ENCODE measurements at regions of chr9 and their contacts with region 1.

Region 1: DNA sequence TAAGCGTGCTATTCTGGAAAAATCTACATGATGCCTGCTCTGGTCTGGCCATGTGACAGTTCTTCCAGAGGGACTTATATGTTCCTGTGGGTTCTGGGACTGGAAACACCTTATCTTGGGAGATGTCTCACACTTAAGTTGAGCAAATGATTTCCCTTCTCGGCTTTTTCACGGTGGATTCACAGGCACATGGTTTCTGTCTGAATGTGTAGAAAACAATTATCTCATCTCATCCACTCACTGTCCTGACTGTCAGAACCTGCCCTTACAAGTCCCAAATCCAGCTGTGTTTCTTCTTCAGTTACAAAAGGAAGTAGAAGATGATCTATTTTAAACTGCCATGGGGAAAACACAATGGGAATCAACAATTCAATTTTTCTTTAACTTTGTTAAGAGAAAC is 184.0 kb downstream of the SYK start:
- DNase-seq: no peak
- ATAC-seq: no peak
- H3K4me3 ChIP-seq: no peak overlapping the region
- H3K27ac ChIP-seq: no peak overlapping the region
- H3K4me1 ChIP-seq: no peaks in the 10 kb centered on the region
- H3K27me3 ChIP-seq: no peaks in the 10 kb centered on the region
- CTCF ChIP-seq: no peak
- EP300 ChIP-seq: no peak
- POLR2A ChIP-seq: no peak
- RAD21 ChIP-seq: no peak

Region 2: DNA sequence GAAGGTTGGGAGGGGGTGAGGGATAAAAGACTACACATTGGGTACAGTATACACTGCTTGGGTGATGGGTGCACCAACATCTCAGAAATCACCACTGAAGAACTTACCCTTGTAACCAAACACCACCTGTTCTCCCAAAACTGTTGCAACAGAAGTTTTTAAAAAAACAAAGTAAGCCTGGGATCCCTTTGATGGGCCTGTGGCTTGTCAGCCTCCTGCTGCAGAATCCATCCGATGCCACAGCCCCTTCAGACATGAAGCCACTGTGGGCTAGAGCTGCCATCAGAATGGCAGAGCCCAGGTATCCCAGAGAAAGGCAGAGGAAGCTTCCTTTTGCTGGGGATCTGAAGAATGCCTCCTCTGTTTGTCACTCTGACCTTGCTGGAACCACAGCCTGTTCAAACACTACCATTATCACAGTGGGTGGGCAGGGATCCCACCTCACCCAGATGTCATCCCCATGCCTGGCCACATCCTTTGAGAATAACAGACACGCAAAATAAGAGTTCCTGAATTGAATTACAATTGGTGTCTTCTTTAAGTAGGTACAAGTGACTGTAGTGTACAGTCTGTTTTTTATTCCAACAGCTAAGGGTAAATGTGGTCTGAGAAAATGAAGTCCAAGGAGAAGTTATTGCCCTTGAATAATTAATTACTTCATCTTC is 264.9 kb before region 1 on chr9:
- CTCF ChIA-PET with region 1: no interaction called
- POLR2A ChIA-PET with region 1: no interaction called
- RAD21 ChIA-PET with region 1: no interaction called
- SMC1A ChIA-PET with region 1: no interaction called
- in situ Hi-C with region 1: no loop called
- intact Hi-C with region 1: no loop called
- DNase-seq: no peak
- ATAC-seq: no peak
- H3K4me3 ChIP-seq: no peak overlapping the region
- H3K27ac ChIP-seq: no peak overlapping the region
- H3K4me1 ChIP-seq: no peaks in the 10 kb centered on the region
- H3K27me3 ChIP-seq: no peaks in the 10 kb centered on the region; a peak in 2 of 4 replicates
- CTCF ChIP-seq: no peak
- EP300 ChIP-seq: no peak
- POLR2A ChIP-seq: no peak
- RAD21 ChIP-seq: no peak

Region 3: GRCh38 chr9:91033797-91034196 is 48.2 kb after region 1 on chr9:
- CTCF ChIA-PET with region 1: no interaction called
- POLR2A ChIA-PET with region 1: no interaction called
- RAD21 ChIA-PET with region 1: no interaction called
- SMC1A ChIA-PET with region 1: no interaction called
- in situ Hi-C with region 1: no loop called
- intact Hi-C with region 1: no loop called
- DNase-seq: no peak
- ATAC-seq: peak; percentile 71
- H3K4me3 ChIP-seq: no peak overlapping the region
- H3K27ac ChIP-seq: no peak overlapping the region
- H3K4me1 ChIP-seq: peaks cover 30% of the 10 kb centered on the region
- H3K27me3 ChIP-seq: peaks cover 0 to 5% of the 10 kb centered on the region in 2 experiments; a peak in 3 of 4 replicates
- CTCF ChIP-seq: peak; percentile 50 to 74 (median 63)
- EP300 ChIP-seq: no peak
- POLR2A ChIP-seq: no peak
- RAD21 ChIP-seq: peak; percentile 88

Region 4: GRCh38 chr9:91047993-91048607 is 62.5 kb after region 1 on chr9:
- CTCF ChIA-PET with region 1: no interaction called
- POLR2A ChIA-PET with region 1: no interaction called
- RAD21 ChIA-PET with region 1: no interaction called
- SMC1A ChIA-PET with region 1: no interaction called
- in situ Hi-C with region 1: no loop called
- intact Hi-C with region 1: loop called (anchors 10 kb)
- DNase-seq: no peak
- ATAC-seq: no peak
- H3K4me3 ChIP-seq: no peak overlapping the region
- H3K27ac ChIP-seq: no peak overlapping the region
- H3K4me1 ChIP-seq: no peaks in the 10 kb centered on the region
- H3K27me3 ChIP-seq: no peaks in the 10 kb centered on the region; a peak in 1 of 4 replicates
- CTCF ChIP-seq: no peak
- EP300 ChIP-seq: no peak
- POLR2A ChIP-seq: no peak
- RAD21 ChIP-seq: no peak

Measured in GM12878 (cell line).